Heart right ventricle (tissue), 16 donors: ENCODE measurements at regions of chrX and their contacts with region 1.

Region 1: GRCh38 chrX:14497184-14497666 is 32.1 kb upstream of the GLRA2 start:
- DNase-seq: no peak
- ATAC-seq: no peak
- H3K4me3 ChIP-seq: peak overlapping the region in 8 of 10 donors; percentile 9 to 42 (median 34)
- H3K27ac ChIP-seq: peak overlapping the region in 8 of 10 donors; percentile 15 to 79 (median 60)
- H3K4me1 ChIP-seq: peaks cover 0 to 9% (median 0%) of the 10 kb centered on the region in 9 donors
- H3K27me3 ChIP-seq: peaks cover 0 to 7% (median 0%) of the 10 kb centered on the region in 7 donors
- CTCF ChIP-seq: no peak

Region 2: DNA sequence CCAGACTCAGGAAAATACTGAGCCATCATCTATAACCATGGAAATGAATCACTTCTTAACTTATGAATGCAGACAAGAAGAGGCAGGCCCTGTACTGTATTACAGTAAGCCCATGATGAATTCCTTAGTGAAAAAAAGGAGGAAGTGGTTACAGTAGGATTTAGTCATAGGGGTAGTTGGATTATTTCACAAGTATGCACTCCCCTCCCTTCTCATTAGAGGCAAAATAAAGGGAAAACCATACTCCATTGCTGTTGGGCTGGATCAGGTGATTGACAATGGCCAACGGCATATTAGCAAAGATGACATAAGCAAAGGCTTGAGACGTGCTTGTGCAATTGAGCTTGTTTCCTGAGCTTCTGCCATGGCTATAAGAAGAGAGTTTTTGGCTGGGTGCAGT is 1887.1 kb before region 1 on chrX:
- intact Hi-C with region 1: loop called in 1 of 10 experiments (anchors 5 kb)
- DNase-seq: no peak
- ATAC-seq: no peak
- H3K4me3 ChIP-seq: no peak overlapping the region
- H3K27ac ChIP-seq: no peak overlapping the region
- H3K4me1 ChIP-seq: no peaks in the 10 kb centered on the region
- H3K27me3 ChIP-seq: no peaks in the 10 kb centered on the region
- CTCF ChIP-seq: no peak

Region 3: GRCh38 chrX:13742397-13743176 is 754.6 kb before region 1 on chrX:
- intact Hi-C with region 1: loop called in 1 of 10 experiments (anchors 5 kb)
- DNase-seq: no peak
- ATAC-seq: no peak
- H3K4me3 ChIP-seq: no peak overlapping the region
- H3K27ac ChIP-seq: peak overlapping the region in 1 of 10 donors; percentile 61
- H3K4me1 ChIP-seq: no peaks in the 10 kb centered on the region
- H3K27me3 ChIP-seq: peaks cover 0 to 3% (median 0%) of the 10 kb centered on the region in 7 donors
- CTCF ChIP-seq: no peak

Region 4: GRCh38 chrX:14476205-14476604 is 21.0 kb before region 1 on chrX:
- intact Hi-C with region 1: loop called in 1 of 10 experiments (anchors 2 kb)
- DNase-seq: no peak
- ATAC-seq: peak in 1 of 8 donors; percentile 25
- H3K4me3 ChIP-seq: no peak overlapping the region
- H3K27ac ChIP-seq: peak overlapping the region in 2 of 10 donors; percentile 15 to 22
- H3K4me1 ChIP-seq: no peaks in the 10 kb centered on the region
- H3K27me3 ChIP-seq: peaks cover 0 to 8% (median 0%) of the 10 kb centered on the region in 7 donors
- CTCF ChIP-seq: no peak